Heart right ventricle (tissue), 16 donors: ENCODE measurements at regions of chr7 and their contacts with region 1.

Region 1: GRCh38 chr7:131879424-131879823 is 323.0 kb upstream of the PODXL start:
- DNase-seq: no peak
- ATAC-seq: no peak
- H3K4me3 ChIP-seq: no peak overlapping the region
- H3K27ac ChIP-seq: no peak overlapping the region
- H3K4me1 ChIP-seq: no peaks in the 10 kb centered on the region
- H3K27me3 ChIP-seq: peaks cover 0 to 11% (median 0%) of the 10 kb centered on the region in 7 donors
- CTCF ChIP-seq: no peak

Region 2: DNA sequence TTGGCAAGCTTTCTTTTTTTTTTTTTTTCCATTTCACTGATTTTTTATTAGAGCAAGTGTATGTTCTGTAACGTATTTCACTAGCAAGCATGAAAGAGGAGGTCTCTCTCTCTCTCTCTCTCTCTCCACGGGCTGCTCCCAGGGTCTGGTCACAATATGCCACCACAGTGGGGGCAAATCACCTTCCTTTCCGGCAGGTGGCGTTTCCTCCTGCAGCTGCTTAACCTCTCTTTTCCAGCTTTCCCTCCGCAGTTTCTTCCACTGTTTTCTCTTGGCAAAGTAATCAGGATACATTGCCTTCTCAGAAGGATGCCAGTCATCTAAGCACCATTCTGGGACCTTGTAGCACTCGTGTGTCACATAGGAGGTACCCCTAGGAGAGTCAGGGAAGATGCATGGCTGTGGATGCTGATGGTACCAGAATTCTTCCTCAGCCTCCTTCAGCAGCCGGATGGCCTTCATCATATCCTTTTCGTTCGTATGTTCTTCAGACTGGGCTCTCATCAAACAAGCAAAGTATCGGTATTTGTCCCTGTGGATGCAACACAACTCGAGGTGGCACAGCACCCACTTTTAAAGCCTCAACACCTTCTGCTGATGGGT is 125.7 kb before region 1 on chr7:
- intact Hi-C with region 1: no loop called
- DNase-seq: no peak
- ATAC-seq: no peak
- H3K4me3 ChIP-seq: no peak overlapping the region
- H3K27ac ChIP-seq: no peak overlapping the region
- H3K4me1 ChIP-seq: no peaks in the 10 kb centered on the region
- H3K27me3 ChIP-seq: peaks cover 0 to 42% (median 13%) of the 10 kb centered on the region in 7 donors
- CTCF ChIP-seq: peak in 4 of 9 donors; percentile 8 to 28 (median 20)

Region 3: DNA sequence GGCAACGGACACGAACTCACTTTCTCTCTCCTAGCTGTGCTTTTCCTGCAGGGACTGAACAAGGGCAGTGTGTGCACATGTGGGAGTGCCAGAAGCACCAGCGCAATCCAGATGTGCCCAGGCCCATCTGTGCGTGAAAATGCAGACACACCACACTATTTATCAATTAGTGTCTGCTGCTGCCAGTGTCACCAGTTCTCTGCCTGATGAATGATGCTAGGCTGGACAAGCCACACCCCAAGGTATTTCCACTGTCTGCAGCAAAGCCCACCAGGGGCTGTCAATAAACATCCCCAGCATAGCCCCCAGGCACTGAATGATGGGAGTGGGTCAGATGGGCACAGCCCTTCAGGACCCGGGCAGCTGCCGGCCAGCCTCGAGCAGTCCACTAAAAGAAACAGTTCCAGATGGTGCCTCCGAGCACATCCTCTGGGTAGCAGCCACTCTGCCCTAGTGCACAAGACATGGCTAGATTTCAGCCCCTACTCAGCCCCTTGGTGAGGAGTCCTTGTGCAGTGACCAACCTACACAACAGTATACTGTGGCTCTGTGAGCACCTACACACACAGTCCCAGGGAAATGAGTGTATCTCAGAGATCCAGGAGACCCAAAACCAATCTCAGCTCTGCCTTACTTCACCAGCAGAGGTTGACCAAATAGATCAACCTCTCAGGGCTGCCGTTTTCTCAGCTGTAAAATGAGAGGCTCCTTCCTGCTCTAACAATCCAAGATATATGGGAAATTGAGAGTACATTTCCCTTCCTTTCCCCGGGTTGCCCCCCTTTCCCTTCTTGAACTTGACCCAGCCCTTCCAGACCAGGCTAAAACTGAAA is 382.1 kb after region 1 on chr7:
- intact Hi-C with region 1: loop called in 1 of 10 experiments (anchors 5 kb)
- DNase-seq: no peak
- ATAC-seq: no peak
- H3K4me3 ChIP-seq: no peak overlapping the region
- H3K27ac ChIP-seq: no peak overlapping the region
- H3K4me1 ChIP-seq: peaks cover 0 to 18% (median 1%) of the 10 kb centered on the region in 9 donors
- H3K27me3 ChIP-seq: no peaks in the 10 kb centered on the region
- CTCF ChIP-seq: no peak